Activated CD4-positive, alpha-beta T cell treated with anti-CD3 and anti-CD28 coated beads for 36 hours (primary cell): ENCODE measurements at regions of chr17 and their contacts with region 1.

Region 1: GRCh38 chr17:35069311-35069710 is 5.8 kb upstream of the RFFL start:
- DNase-seq: no peak
- ATAC-seq: peak; percentile 16
- H3K4me3 Mint-ChIP-seq: no peak overlapping the region
- H3K27ac Mint-ChIP-seq: no peak overlapping the region
- H3K4me1 Mint-ChIP-seq: peaks cover 72% of the 10 kb centered on the region
- H3K27me3 Mint-ChIP-seq: no peaks in the 10 kb centered on the region

Region 2: GRCh38 chr17:35046740-35047283 is 22.5 kb before region 1 on chr17:
- CTCF ChIA-PET with region 1: interaction called, 16 read pairs
- POLR2A ChIA-PET with region 1: interaction called, 19 read pairs
- intact Hi-C with region 1: loop called in 1 of 2 experiments (anchors 2 kb)
- DNase-seq: peak; percentile 78
- ATAC-seq: peak; percentile 95
- H3K4me3 Mint-ChIP-seq: peak overlapping the region; percentile 71
- H3K27ac Mint-ChIP-seq: peak overlapping the region; percentile 91
- H3K4me1 Mint-ChIP-seq: peaks cover 80% of the 10 kb centered on the region
- H3K27me3 Mint-ChIP-seq: no peaks in the 10 kb centered on the region

Region 3: GRCh38 chr17:35082073-35082657 is 12.9 kb after region 1 on chr17:
- CTCF ChIA-PET with region 1: interaction called, 21 read pairs
- POLR2A ChIA-PET with region 1: interaction called, 9 read pairs
- intact Hi-C with region 1: loop called (anchors 1 kb)
- DNase-seq: no peak
- ATAC-seq: peak; percentile 57
- H3K4me3 Mint-ChIP-seq: peak overlapping the region; percentile 1
- H3K27ac Mint-ChIP-seq: peak overlapping the region; percentile 93
- H3K4me1 Mint-ChIP-seq: peaks cover 83% of the 10 kb centered on the region
- H3K27me3 Mint-ChIP-seq: no peaks in the 10 kb centered on the region